ENCODE measurements at regions of chr2 and their contacts with region 1.

Region 1: DNA sequence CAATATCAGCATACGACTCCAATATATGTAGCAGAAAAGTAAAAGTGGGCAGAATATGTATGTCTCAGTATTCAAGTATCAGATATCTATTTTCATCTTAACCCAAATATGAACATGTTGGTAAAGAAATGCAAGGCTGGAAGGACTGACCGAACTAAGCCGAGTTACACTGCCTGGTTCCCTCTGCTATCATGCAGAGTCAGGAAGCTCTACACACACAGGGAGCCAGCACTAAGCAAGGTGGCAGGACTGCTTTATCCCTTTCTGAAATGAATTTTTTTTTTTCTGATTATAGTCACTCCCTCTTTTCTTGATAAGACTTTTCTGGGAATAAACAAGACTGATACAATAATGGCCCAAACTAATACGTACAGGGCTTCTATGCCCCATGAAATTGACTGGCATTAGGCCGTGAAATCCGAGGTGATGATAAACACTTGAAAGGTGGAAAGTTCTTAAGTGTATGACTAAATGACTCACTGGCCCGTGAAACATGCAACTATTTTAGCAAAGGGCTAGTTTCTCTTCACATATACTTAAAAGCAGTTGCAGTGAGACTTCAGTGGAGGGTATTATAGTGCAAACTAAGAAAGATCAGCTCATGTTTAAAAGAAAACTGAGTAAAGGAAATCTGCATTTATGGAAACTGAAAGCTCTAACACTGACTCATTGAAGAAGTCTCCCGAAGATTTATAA is 14.9 kb downstream of the DPP4 start:
- DNase-seq: peak; percentile 33
- H3K4me3 Mint-ChIP-seq: peak overlapping the region; percentile 54
- H3K27ac Mint-ChIP-seq: peak overlapping the region; percentile 93
- H3K4me1 Mint-ChIP-seq: peaks cover 82% of the 10 kb centered on the region
- H3K27me3 Mint-ChIP-seq: no peaks in the 10 kb centered on the region

Region 2: GRCh38 chr2:161160226-161161069 is 898.7 kb before region 1 on chr2 and contains the start of gene TANK:
- CTCF ChIA-PET with region 1: no interaction called
- POLR2A ChIA-PET with region 1: no interaction called
- intact Hi-C with region 1: loop called (anchors 2 kb)
- DNase-seq: peak; percentile 96
- H3K4me3 Mint-ChIP-seq: peak within 1 kb of the TSS; percentile 96
- H3K27ac Mint-ChIP-seq: peak within 1 kb of the TSS; percentile 98
- H3K4me1 Mint-ChIP-seq: peaks cover 55% of the 10 kb centered on the region
- H3K27me3 Mint-ChIP-seq: no peaks in the 10 kb centered on the region
- total RNA-seq, gene TANK: 71.4 to 74.1 TPM

Region 3: GRCh38 chr2:161965994-161966393 is 93.1 kb before region 1 on chr2:
- CTCF ChIA-PET with region 1: no interaction called
- POLR2A ChIA-PET with region 1: no interaction called
- intact Hi-C with region 1: loop called (anchors 1 kb)
- DNase-seq: no peak
- H3K4me3 Mint-ChIP-seq: no peak overlapping the region
- H3K27ac Mint-ChIP-seq: peak overlapping the region; percentile 28
- H3K4me1 Mint-ChIP-seq: peaks cover 28% of the 10 kb centered on the region
- H3K27me3 Mint-ChIP-seq: peaks cover 1% of the 10 kb centered on the region

Region 4: GRCh38 chr2:161983866-161984265 is 75.3 kb before region 1 on chr2:
- CTCF ChIA-PET with region 1: no interaction called
- POLR2A ChIA-PET with region 1: no interaction called
- intact Hi-C with region 1: no loop called
- DNase-seq: no peak
- H3K4me3 Mint-ChIP-seq: no peak overlapping the region
- H3K27ac Mint-ChIP-seq: no peak overlapping the region
- H3K4me1 Mint-ChIP-seq: peaks cover 32% of the 10 kb centered on the region
- H3K27me3 Mint-ChIP-seq: no peaks in the 10 kb centered on the region

Region 5: GRCh38 chr2:162013514-162014475 is 45.3 kb before region 1 on chr2:
- CTCF ChIA-PET with region 1: no interaction called
- POLR2A ChIA-PET with region 1: interaction called, 5 read pairs
- intact Hi-C with region 1: loop called (anchors 1 kb)
- DNase-seq: no peak
- H3K4me3 Mint-ChIP-seq: peak overlapping the region; percentile 56
- H3K27ac Mint-ChIP-seq: peak overlapping the region; percentile 89
- H3K4me1 Mint-ChIP-seq: peaks cover 61% of the 10 kb centered on the region
- H3K27me3 Mint-ChIP-seq: no peaks in the 10 kb centered on the region

Region 6: GRCh38 chr2:162073888-162074645 is 14.9 kb after region 1 on chr2 and contains the start of gene DPP4:
- CTCF ChIA-PET with region 1: interaction called, 45 read pairs
- POLR2A ChIA-PET with region 1: interaction called, 31 read pairs
- intact Hi-C with region 1: loop called (anchors 1 kb)
- DNase-seq: peak; percentile 69
- H3K4me3 Mint-ChIP-seq: peak within 1 kb of the TSS; percentile 90
- H3K27ac Mint-ChIP-seq: peak within 1 kb of the TSS; percentile 82
- H3K4me1 Mint-ChIP-seq: peaks cover 52% of the 10 kb centered on the region
- H3K27me3 Mint-ChIP-seq: no peaks in the 10 kb centered on the region
- total RNA-seq, gene DPP4: 29.9 to 30.7 TPM

Region 7: DNA sequence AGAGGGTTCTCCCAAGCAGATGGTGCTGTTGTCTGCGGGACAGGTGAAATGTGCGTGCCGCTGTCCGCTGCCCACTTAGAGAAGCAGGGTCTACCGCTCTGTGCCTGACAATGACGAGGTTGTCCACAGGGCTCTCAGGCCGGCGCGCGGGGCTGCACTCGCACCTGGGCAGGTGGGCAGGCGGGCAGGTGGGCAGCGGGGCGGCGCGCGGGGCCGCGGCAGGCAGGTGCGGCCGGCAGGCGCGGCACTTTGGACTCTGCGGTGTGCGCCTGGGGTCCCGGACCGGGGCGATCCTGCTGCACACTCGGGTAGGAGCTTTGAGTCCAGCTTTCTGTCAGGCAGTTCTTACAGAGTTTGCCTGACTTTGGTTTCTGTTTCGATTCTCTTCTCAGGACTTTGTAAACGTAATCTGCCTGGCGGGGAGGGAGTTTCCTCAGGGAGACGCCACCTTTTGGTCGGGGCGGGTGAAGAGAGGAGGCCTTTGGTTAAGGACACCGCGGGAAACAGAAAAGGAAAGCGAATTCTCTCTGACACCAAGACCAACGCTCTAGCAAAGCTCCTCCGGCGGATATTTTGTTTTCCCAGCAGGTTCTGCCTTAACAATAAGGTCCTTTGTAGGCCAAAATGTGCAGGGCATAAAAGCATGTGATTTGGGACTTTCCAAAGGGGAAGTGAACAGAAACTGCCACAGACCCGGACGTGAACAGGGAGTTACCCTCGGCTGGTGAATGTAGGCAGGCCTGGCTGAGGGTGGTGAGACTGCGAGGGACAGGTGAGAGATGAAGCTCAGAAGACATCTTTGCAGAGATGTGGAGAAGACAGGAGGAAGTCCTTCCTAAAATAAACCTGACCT is 259.4 kb after region 1 on chr2 and contains the start of gene IFIH1:
- CTCF ChIA-PET with region 1: no interaction called
- POLR2A ChIA-PET with region 1: no interaction called
- intact Hi-C with region 1: loop called (anchors 1 kb)
- DNase-seq: peak; percentile 87
- H3K4me3 Mint-ChIP-seq: peak within 1 kb of the TSS; percentile 85
- H3K27ac Mint-ChIP-seq: peak within 1 kb of the TSS; percentile 95
- H3K4me1 Mint-ChIP-seq: peaks cover 55% of the 10 kb centered on the region
- H3K27me3 Mint-ChIP-seq: no peaks in the 10 kb centered on the region
- total RNA-seq, gene IFIH1: 33.3 to 34.2 TPM

Region 8: DNA sequence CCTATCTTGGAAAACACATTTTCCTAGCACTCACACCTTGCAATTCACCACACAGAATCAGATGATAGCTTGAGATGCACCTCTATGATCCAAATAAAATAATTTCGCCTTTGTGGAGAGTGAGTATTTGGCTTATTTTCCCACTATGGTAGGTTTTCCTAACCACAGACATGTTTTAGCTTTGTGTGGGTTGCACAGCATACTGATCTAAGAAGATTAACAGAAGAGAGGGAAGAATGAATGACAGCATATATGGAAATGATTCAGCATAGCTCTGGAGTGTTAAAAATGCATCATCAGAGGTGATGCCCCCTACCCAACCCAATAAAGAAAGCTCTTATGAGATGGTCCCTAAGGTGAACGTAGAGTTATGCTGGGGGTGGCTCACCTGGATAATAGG is 357.3 kb after region 1 on chr2:
- CTCF ChIA-PET with region 1: no interaction called
- POLR2A ChIA-PET with region 1: no interaction called
- intact Hi-C with region 1: no loop called
- DNase-seq: no peak
- H3K4me3 Mint-ChIP-seq: no peak overlapping the region
- H3K27ac Mint-ChIP-seq: no peak overlapping the region
- H3K4me1 Mint-ChIP-seq: no peaks in the 10 kb centered on the region
- H3K27me3 Mint-ChIP-seq: peaks cover 1% of the 10 kb centered on the region

Region 9: GRCh38 chr2:162581959-162582798 is 523.1 kb after region 1 on chr2:
- CTCF ChIA-PET with region 1: no interaction called
- POLR2A ChIA-PET with region 1: no interaction called
- intact Hi-C with region 1: no loop called
- DNase-seq: no peak
- H3K4me3 Mint-ChIP-seq: no peak overlapping the region
- H3K27ac Mint-ChIP-seq: no peak overlapping the region
- H3K4me1 Mint-ChIP-seq: no peaks in the 10 kb centered on the region
- H3K27me3 Mint-ChIP-seq: no peaks in the 10 kb centered on the region